Astrocyte of the cerebellum (primary cell): ENCODE measurements at regions of chr2 and their contacts with region 1.

Region 1: DNA sequence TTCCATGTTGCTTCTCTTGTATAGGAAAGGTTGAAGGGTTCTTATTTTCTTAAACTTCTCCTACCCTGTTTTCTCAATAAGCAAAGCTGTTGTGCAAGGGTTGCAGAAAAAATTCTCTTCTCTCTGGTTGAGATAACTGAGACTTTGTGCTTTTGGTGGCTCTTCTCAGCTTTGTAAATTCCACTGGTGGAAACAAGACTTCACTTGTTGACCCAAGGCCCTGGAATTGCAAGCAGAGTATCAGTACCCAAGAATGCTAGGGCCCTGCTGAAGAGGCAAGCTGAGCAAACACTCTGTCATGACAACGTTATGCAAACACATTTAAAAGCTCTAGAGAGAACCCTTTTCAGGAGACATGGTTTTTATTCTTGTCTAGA is 294.7 kb upstream of the EPAS1 start:
- DNase-seq: no peak
- H3K4me3 ChIP-seq: no peak overlapping the region
- CTCF ChIP-seq: no peak

Region 2: DNA sequence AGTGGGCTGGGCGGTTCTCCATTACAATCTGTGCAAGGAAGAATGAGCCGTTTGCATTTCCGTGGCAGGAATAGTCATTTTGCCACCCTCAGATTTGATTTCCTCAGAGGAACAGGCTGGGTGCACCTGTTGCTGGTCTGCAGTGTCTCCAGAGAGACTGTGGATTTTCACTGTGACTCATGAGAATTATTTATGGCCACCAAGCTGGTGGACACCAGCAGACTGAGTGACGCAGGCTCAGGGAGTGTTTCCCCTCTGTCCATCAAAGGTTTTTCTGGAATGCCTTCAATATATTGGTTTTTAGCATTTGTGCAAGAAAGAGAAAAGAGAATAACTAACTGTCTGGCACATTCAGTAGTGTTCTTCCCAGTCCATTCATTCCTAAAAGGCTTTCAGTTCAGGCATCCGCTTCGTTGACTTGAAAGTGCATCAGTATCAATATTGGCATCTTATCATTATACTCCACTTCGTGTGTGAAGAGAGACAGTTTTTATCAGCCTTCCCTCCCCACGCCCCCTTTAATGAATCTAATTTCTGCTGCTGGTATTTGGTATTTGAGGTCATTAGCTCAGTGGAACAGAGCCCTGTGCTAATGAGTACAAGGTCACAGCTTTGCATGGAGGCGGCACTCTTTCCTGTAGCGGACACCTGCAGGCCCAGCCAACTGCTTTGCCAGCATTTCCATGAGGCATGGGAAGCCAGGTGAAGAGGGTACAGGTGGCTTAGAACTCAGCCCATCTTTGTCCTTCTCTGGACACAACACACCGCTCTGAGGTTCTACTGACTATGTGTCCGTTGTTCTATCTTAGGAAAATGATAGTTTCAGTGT is 311.1 kb before region 1 on chr2:
- in situ Hi-C with region 1: no loop called
- DNase-seq: no peak
- H3K4me3 ChIP-seq: no peak overlapping the region
- CTCF ChIP-seq: no peak

Region 3: GRCh38 chr2:46451131-46451711 is 448.7 kb after region 1 on chr2:
- in situ Hi-C with region 1: loop called (anchors 10 kb)
- DNase-seq: no peak
- H3K4me3 ChIP-seq: no peak overlapping the region
- CTCF ChIP-seq: no peak